ENCODE measurements at regions of chr12 and their contacts with region 1.

Region 1: DNA sequence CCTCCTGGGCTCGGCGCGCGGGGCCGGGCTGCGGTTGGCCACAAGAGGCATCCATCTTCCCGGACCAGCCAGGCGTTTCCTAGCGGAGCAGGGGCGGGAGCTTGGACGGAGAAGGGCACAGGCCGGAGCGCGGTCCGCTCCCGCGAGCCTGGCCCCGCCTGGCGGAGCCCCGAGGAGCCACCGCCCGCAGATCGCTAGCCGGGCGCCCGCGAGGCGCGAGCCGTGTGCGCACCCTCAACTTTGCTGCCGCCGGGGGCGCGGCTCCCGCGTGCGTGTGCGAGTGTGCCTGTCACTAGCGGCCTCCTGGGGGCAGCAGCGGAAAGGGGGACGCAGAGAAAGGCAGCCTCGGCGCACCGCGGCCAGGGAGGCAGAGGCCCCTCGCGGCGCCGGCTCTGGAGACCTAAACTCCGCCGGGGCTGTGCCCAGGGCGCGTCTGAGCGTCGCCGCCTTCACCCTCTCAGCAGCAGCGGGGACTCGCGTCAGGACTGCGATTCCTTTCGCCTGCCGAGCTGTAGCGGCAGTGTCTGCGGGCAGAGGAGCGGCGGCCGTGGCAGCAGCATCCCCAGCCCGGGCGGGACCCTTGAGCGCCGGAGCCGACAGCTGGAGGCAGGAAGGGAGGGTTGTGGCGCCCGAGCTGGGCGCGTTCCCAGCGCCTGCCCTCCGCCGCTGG is 644 bp upstream of the SRGAP1 start:
- DNase-seq: peak; percentile 95
- ATAC-seq: peak; percentile 97

Region 2: GRCh38 chr12:63949902-63950301 is 106.0 kb after region 1 on chr12:
- intact Hi-C with region 1: no loop called
- DNase-seq: no peak
- ATAC-seq: peak; percentile 88

Region 3: GRCh38 chr12:64099397-64099796 is 255.5 kb after region 1 on chr12:
- intact Hi-C with region 1: loop called (anchors 10 kb)
- DNase-seq: no peak
- ATAC-seq: peak; percentile 81

Measured in Right ventricle myocardium superior (tissue), 1 donor.